ENCODE measurements at regions of chr10 and their contacts with region 1.

Region 1: DNA sequence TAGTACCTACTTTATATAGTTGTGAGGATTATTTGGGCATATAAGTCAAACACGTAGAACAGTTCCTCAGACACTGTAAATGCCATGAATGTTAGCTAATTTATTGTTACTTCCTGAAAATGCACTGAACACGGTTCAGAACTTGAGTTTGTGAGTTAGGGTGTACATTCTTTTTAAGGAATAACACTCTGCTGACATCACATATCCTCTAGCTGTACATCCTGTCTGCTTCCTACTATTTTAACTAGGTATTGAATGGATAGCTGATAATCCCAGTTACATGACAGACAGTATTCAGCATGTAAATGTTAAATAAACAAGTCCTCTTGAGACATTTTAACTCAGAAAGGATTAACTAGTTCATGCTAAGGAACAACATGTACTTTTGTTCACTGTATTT is 16.0 kb downstream of the SAMD8 start:
- DNase-seq: peak in 2 of 3 donors; percentile 38 to 63
- H3K4me3 ChIP-seq: no peak overlapping the region
- H3K27ac ChIP-seq: peak overlapping the region in 1 of 2 experiments; percentile 31
- H3K4me1 ChIP-seq: peaks cover 5 to 33% (median 16%) of the 10 kb centered on the region in 4 experiments
- H3K27me3 ChIP-seq: no peaks in the 10 kb centered on the region

Region 2: GRCh38 chr10:75137533-75138438 is 10.3 kb after region 1 on chr10:
- CTCF ChIA-PET with region 1: interaction called, 4 read pairs
- POLR2A ChIA-PET with region 1: interaction called, 10 read pairs
- DNase-seq: peak in 1 of 3 donors; percentile 17
- H3K4me3 ChIP-seq: no peak overlapping the region
- H3K27ac ChIP-seq: no peak overlapping the region
- H3K4me1 ChIP-seq: no peaks in the 10 kb centered on the region
- H3K27me3 ChIP-seq: no peaks in the 10 kb centered on the region

Measured in common myeloid progenitor, CD34-positive (primary cell).